ENCODE measurements at regions of chr5 and their contacts with region 1.

Region 1: DNA sequence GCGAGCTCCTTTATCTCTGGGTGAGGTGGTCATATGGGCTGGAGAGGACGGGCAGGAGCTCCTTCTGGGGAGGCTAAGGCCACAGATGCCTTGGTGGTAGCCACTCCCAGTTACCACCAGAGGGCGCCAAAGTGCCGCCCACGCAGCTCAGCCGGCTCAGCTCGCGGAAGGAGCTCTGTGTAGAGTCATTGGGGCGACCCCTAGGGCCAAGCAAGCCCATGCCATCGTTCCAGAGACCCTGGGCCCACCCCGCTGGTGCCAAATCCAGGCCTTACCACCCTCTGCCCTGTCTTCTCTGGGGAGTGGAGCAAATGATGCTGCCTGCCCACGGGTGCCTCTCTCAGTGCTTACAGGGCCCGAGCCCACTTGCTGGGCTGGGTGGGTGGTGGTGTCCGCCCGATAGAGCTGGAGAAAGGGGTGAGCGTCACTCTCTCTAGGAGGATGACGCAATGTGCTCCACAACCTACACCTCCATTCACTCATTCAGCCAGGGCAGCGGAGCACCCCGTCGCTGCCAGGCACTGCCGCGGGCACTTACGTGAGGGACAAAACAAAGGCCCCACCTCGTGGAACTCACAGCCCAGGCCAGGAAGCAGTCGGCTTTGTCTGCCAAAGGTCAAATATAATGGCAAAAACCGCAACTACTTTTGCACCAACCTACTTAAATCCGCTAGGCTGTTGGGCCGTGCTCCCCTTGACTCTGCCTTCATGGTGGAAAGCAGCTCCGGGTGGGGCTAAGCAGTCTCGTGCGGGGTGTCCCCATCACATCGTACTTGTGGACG is 13.8 kb downstream of the TSPAN17 start:
- DNase-seq: peak; percentile 94
- CTCF ChIP-seq: peak; percentile 97

Region 2: DNA sequence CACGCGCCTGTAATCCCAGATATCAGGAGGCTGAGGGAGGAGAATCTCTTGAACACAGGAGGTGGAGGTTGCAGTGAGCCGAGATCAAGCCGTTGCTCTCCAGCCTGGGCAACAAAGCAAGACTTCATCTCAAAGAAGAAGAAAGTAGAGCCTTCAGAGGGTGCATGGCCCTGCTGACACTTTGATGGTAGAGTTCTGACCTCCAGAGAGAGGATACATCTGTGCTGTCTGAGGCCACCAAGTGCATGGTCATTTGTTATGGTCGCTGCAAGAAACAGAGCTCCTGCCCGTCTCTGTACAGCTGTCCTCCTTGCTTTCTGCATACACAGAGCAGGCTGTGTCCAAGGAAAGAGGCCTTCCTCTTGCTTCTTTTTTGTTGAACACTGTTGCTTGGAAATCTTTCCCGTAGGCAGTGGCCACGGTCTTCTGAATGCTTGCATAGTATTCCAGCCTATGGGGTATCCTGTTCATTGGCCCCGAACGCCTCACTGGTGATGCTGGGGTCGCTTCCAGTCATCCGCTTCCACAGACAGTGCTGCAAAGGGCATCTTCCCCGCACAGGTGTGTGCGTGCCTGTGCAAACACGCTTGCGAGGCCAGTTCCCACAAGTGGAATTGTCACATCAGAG is 112.5 kb after region 1 on chr5:
- in situ Hi-C with region 1: no loop called
- DNase-seq: peak; percentile 4
- CTCF ChIP-seq: no peak

Region 3: DNA sequence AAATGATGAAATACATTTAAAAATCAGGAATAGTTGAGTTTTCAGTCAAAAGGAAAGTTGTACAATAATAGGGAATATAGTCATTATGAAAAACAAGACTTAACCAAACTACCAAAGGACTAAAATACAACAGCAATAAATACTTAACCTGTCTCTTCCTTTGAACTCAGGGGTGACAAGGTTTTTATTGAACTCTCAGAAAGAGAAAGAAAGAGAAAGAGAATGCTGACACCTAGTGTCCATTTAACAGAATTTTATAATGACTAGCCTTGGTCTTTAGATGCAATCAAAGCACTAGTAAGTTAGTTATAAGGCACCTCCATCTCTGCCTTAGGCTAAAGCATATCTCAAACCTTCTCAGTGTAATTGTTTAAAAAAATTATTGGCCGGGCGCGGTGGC is 298.0 kb after region 1 on chr5:
- in situ Hi-C with region 1: loop called (anchors 10 kb)
- DNase-seq: peak; percentile 49
- CTCF ChIP-seq: peak; percentile 37

Region 4: DNA sequence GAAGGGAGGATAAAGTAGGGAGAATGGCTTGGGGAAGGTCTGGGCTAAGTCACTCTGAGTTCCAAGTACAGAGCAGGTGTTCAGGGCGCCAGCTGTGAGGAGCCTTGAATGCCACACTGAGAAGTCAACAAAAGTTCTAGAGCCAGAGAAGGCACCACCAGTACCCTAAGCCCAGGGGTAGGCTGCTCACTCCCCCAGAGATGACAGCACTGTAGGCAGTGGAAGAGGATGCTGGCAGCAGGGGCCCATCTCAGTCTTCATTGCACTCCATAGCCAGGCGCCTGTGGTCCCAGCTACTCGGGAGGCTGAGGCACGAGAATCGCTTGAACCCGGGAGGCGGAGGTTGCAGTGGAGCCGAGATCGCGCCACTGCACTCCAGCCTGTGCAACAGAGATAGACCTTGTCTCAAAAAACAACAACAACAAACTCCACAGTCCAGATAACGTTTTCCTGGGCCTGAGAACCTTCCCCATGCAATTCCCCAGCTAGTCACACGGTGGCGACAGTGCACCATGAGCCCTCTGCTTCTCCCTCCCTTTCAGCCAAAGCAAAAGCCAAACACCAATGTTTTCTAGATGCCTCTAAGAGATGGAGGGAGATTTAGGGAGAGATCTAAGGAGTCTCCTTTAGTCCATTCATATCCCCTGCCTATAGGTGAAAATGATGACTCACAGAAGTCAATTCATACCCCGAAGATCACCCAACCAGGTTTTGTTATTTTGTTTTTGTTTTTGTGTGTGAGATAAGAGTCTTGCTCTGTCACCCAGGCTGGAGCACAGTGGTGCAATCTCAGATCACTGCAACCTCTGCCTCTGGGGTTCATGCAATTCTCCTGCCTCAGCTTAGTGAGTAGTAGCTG is 452.7 kb after region 1 on chr5:
- in situ Hi-C with region 1: loop called (anchors 25 kb)
- DNase-seq: peak; percentile 93
- CTCF ChIP-seq: peak; percentile 99

Measured in GM13977 (cell line).